ENCODE measurements at regions of chr14 and their contacts with region 1.

Region 1: GRCh38 chr14:50714450-50715073 is 46.5 kb upstream of the SAV1 start:
- DNase-seq: no peak
- H3K4me3 ChIP-seq: no peak overlapping the region
- CTCF ChIP-seq: peak; percentile 63

Region 2: DNA sequence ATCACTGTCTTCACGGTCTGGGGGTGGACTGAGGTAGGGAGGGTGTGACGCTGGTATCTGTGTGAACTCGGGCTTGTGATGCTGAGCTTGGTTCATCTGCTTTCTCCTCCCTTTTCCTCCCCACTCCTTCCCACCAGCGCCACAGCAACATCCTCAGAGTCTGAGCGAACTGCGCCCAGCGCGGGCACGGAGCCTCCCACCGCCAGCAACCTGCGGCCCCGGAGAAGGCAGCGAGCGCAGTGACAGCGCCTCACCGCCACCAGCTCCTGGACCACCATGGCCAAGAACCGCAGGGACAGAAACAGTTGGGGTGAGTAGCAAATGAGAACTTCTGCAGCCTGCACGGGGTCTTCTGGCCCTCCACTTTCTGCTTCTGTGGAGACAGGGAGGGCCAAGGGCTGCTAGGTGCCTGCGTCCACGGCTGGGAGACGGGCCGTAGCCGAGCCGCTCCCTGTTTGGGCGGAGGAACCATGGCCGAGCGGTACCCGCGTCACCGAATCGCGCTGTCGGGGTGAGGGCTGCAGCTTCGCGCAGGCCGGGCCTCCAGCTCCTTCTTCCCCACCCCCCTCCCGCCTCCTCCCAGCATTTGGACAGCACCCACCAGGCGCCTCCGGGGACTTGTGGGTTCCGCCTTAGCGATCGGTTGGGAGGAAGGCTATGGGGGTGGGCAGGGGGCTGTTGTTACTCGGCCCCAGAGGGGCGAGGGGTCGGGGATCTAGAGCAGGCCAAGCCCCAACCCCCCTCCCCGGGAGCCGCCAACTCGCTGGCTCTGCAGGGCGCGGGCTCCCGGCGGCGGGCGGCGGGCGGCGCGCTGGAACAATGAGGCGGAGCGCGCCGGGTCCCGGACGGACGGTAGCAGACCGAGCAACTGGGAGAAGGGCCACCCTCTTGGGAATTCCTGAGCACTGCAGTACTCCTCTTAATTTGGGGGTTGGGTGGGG is 154.3 kb before region 1 on chr14 and contains the start of gene ATL1:
- CTCF ChIA-PET with region 1: no interaction called
- POLR2A ChIA-PET with region 1: no interaction called
- DNase-seq: peak; percentile 1
- H3K4me3 ChIP-seq: peak within 1 kb of the TSS; percentile 67
- CTCF ChIP-seq: no peak

Region 3: GRCh38 chr14:50599700-50600444 is 114.7 kb before region 1 on chr14:
- CTCF ChIA-PET with region 1: interaction called, 29 read pairs
- POLR2A ChIA-PET with region 1: no interaction called
- DNase-seq: no peak
- H3K4me3 ChIP-seq: no peak overlapping the region
- CTCF ChIP-seq: peak; percentile 45

Region 4: DNA sequence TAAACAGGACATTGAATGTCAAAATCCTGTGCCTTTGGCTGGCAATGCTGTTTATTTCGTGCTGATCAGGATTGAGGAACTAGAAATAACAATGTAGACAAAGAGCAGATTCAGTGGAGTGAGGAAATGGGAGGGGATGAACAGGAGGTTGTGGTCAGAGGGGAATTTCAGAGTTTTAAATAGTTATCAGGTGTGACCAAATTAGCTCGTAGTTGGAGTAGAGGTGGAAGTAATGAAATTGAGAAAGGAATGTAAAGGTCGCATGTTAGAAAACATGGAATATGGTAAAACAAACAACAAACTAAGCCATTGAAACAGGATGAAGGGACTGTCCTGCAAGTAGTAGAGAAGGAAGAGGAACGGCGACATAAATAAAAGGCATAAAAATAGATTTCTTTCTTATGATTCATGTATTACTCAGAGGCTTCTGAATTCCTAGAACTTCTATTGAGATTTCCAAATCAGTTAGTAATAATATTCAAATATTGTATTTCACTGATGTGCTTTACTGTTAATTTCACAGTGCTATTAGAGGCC is 37.0 kb before region 1 on chr14:
- CTCF ChIA-PET with region 1: interaction called, 11 read pairs
- POLR2A ChIA-PET with region 1: no interaction called
- DNase-seq: no peak
- H3K4me3 ChIP-seq: no peak overlapping the region
- CTCF ChIP-seq: no peak

Region 5: GRCh38 chr14:50697659-50698290 is 16.8 kb before region 1 on chr14:
- CTCF ChIA-PET with region 1: interaction called, 15 read pairs
- POLR2A ChIA-PET with region 1: no interaction called
- DNase-seq: no peak
- H3K4me3 ChIP-seq: no peak overlapping the region
- CTCF ChIP-seq: no peak

Region 6: GRCh38 chr14:50726372-50727107 is 12.0 kb after region 1 on chr14:
- CTCF ChIA-PET with region 1: interaction called, 49 read pairs
- POLR2A ChIA-PET with region 1: no interaction called
- DNase-seq: no peak
- H3K4me3 ChIP-seq: no peak overlapping the region
- CTCF ChIP-seq: no peak